ENCODE measurements at regions of chr11 and their contacts with region 1.

Region 1: GRCh38 chr11:119356349-119357031 is 10.0 kb upstream of the MFRP start:
- DNase-seq: peak; percentile 74 to 84 (median 83)
- H3K4me3 ChIP-seq: peak overlapping the region; percentile 21 to 94 (median 73)
- H3K27ac ChIP-seq: no peak overlapping the region
- H3K4me1 ChIP-seq: peaks cover 0 to 22% (median 14%) of the 10 kb centered on the region in 4 experiments
- H3K27me3 ChIP-seq: peaks cover 0 to 15% (median 12%) of the 10 kb centered on the region in 5 experiments

Region 2: GRCh38 chr11:119344291-119345010 is 12.0 kb before region 1 on chr11:
- CTCF ChIA-PET with region 1: interaction called, 20 read pairs
- POLR2A ChIA-PET with region 1: no interaction called
- DNase-seq: no peak
- H3K4me3 ChIP-seq: no peak overlapping the region
- H3K27ac ChIP-seq: no peak overlapping the region
- H3K4me1 ChIP-seq: peaks cover 0 to 22% (median 21%) of the 10 kb centered on the region in 4 experiments
- H3K27me3 ChIP-seq: peaks cover 0 to 51% (median 18%) of the 10 kb centered on the region in 5 experiments

Region 3: GRCh38 chr11:119373921-119374631 is 17.6 kb after region 1 on chr11:
- CTCF ChIA-PET with region 1: interaction called, 132 read pairs
- POLR2A ChIA-PET with region 1: interaction called, 3 read pairs
- DNase-seq: peak; percentile 44 to 61 (median 50)
- H3K4me3 ChIP-seq: no peak overlapping the region
- H3K27ac ChIP-seq: no peak overlapping the region
- H3K4me1 ChIP-seq: peaks cover 0 to 3% (median 0%) of the 10 kb centered on the region in 4 experiments
- H3K27me3 ChIP-seq: peaks cover 0 to 3% (median 0%) of the 10 kb centered on the region in 5 experiments

Region 4: GRCh38 chr11:119381181-119381988 is 24.9 kb after region 1 on chr11 and contains the start of gene USP2:
- CTCF ChIA-PET with region 1: interaction called, 132 read pairs
- POLR2A ChIA-PET with region 1: interaction called, 4 read pairs
- DNase-seq: peak; percentile 95 to 96 (median 95)
- H3K4me3 ChIP-seq: peak within 1 kb of the TSS; percentile 32 to 84 (median 74)
- H3K27ac ChIP-seq: peak within 1 kb of the TSS; percentile 54 to 80
- H3K4me1 ChIP-seq: peaks cover 0 to 18% (median 16%) of the 10 kb centered on the region in 4 experiments
- H3K27me3 ChIP-seq: peaks cover 2 to 14% (median 6%) of the 10 kb centered on the region in 5 experiments

Region 5: GRCh38 chr11:119474682-119475596 is 118.4 kb after region 1 on chr11:
- CTCF ChIA-PET with region 1: interaction called, 80 read pairs
- POLR2A ChIA-PET with region 1: interaction called, 3 read pairs
- DNase-seq: peak; percentile 52 to 82 (median 70)
- H3K4me3 ChIP-seq: no peak overlapping the region
- H3K27ac ChIP-seq: no peak overlapping the region
- H3K4me1 ChIP-seq: no peaks in the 10 kb centered on the region
- H3K27me3 ChIP-seq: peaks cover 0 to 6% (median 2%) of the 10 kb centered on the region in 5 experiments